Naive thymus-derived CD4-positive, alpha-beta T cell (primary cell): ENCODE measurements at regions of chr1 and their contacts with region 1.

Region 1: GRCh38 chr1:27662707-27663393 is 9.1 kb downstream of the IFI6 start:
- DNase-seq: peak; percentile 76 to 94 (median 88)
- ATAC-seq: peak; percentile 80
- H3K4me3 ChIP-seq: peak overlapping the region; percentile 64
- H3K4me3 Mint-ChIP-seq: peak overlapping the region; percentile 82 to 94 (median 90)
- H3K27ac ChIP-seq: peak overlapping the region; percentile 81
- H3K27ac Mint-ChIP-seq: peak overlapping the region; percentile 95 to 100 (median 98)
- H3K4me1 ChIP-seq: peaks cover 38 to 46% of the 10 kb centered on the region in 2 donors
- H3K4me1 Mint-ChIP-seq: peaks cover 39 to 62% (median 48%) of the 10 kb centered on the region in 7 donors
- H3K27me3 ChIP-seq: no peaks in the 10 kb centered on the region
- H3K27me3 Mint-ChIP-seq: no peaks in the 10 kb centered on the region

Region 2: DNA sequence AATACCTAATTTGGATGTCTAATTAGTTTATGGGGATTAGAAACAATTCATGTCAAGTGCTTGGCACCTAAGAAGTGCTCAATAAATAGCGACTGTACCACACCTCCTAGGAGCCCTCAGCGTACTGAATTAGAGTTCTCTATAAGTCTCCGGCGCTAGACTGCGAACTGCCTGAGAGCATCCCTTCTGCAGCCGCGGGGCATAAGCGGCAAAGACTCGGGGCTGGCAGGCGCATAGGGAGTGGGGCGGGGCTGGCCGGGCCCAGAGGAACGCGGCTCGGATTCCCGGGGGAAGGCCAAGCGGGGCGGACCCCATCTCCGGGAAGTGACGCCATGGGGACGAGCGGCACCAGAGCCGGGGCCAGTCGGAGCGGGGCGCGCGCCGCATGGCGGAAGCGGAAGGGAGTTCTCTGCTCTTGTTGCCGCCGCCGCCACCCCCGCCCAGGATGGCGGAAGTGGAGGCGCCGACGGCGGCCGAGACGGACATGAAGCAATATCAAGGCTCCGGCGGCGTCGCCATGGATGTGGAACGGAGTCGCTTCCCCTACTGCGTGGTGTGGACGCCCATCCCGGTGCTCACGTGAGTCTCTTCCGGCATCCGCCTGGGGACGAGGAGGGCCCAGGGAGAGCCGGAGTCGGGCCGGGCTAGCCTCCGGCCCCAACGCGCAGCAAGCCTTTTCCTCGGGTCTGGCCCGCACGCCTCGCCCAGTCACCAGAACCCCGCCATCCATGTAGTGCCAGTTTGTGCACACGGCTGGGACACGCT is 340.9 kb before region 1 on chr1 and contains the start of gene TMEM222:
- CTCF ChIA-PET with region 1: no interaction called
- POLR2A ChIA-PET with region 1: interaction called, 3 read pairs
- intact Hi-C with region 1: loop called (anchors 2 to 5 kb)
- DNase-seq: peak; percentile 94 to 99 (median 97)
- ATAC-seq: peak; percentile 98
- H3K4me3 ChIP-seq: peak within 1 kb of the TSS; percentile 91
- H3K4me3 Mint-ChIP-seq: peak within 1 kb of the TSS; percentile 91 to 99 (median 96)
- H3K27ac ChIP-seq: peak within 1 kb of the TSS; percentile 95
- H3K27ac Mint-ChIP-seq: peak within 1 kb of the TSS; percentile 88 to 97 (median 93)
- H3K4me1 ChIP-seq: peaks cover 18 to 22% of the 10 kb centered on the region in 2 donors
- H3K4me1 Mint-ChIP-seq: peaks cover 22 to 59% (median 54%) of the 10 kb centered on the region in 7 donors
- H3K27me3 ChIP-seq: no peaks in the 10 kb centered on the region
- H3K27me3 Mint-ChIP-seq: peaks cover 0 to 5% (median 3%) of the 10 kb centered on the region in 5 donors
- total RNA-seq, gene TMEM222: 23.7 to 44.0 (median 41.9) TPM

Region 3: DNA sequence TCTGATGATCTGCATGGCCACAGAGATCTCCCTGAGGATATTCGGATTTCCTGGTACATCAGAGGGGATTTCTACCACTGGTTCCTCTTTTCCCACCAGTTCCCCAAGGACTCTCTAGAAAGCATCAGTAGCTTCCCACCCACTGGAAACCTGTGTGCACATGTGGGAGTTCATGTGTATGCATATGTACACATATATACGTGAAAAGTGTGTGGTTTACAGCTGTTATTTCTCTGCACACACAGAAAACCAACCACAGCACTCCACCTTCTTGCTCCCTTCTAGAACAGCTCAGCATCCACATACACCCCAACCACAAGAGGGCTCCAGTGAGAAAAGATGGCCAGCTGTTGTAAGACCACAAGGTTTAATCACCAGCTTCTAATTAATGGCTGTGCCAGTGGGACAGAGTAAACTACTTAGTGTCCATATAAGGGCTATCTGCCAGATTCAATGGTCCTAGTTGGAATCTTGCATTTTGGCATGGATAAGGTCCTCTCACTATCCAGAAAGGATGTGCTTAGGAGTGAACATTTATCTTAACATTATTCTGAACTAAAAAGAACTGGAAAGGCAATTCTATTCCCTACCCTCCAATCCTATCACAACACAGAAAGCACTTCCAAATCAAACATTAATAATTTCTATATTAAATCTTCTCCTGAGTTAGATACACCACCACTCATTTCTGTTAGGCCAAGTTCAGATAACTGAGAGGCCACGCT is 246.3 kb before region 1 on chr1:
- CTCF ChIA-PET with region 1: interaction called, 8 read pairs
- POLR2A ChIA-PET with region 1: no interaction called
- intact Hi-C with region 1: loop called in 1 of 2 experiments (anchors 5 kb)
- DNase-seq: peak in 7 of 9 donors; percentile 44 to 67 (median 56)
- ATAC-seq: peak; percentile 87
- H3K4me3 ChIP-seq: no peak overlapping the region
- H3K4me3 Mint-ChIP-seq: no peak overlapping the region
- H3K27ac ChIP-seq: peak overlapping the region; percentile 10
- H3K27ac Mint-ChIP-seq: peak overlapping the region; percentile 3 to 85 (median 53)
- H3K4me1 ChIP-seq: peaks cover 0 to 11% of the 10 kb centered on the region in 2 donors
- H3K4me1 Mint-ChIP-seq: peaks cover 12 to 46% (median 35%) of the 10 kb centered on the region in 7 donors
- H3K27me3 ChIP-seq: no peaks in the 10 kb centered on the region
- H3K27me3 Mint-ChIP-seq: no peaks in the 10 kb centered on the region

Region 4: GRCh38 chr1:27556781-27557595 is 105.9 kb before region 1 on chr1:
- CTCF ChIA-PET with region 1: interaction called, 11 read pairs
- POLR2A ChIA-PET with region 1: interaction called, 11 read pairs
- intact Hi-C with region 1: loop called (anchors 1 kb)
- DNase-seq: peak; percentile 51 to 79 (median 65)
- ATAC-seq: peak; percentile 87
- H3K4me3 ChIP-seq: no peak overlapping the region
- H3K4me3 Mint-ChIP-seq: peak overlapping the region; percentile 14 to 88 (median 67)
- H3K27ac ChIP-seq: no peak overlapping the region
- H3K27ac Mint-ChIP-seq: peak overlapping the region; percentile 32 to 98 (median 81)
- H3K4me1 ChIP-seq: peaks cover 8 to 16% of the 10 kb centered on the region in 2 donors
- H3K4me1 Mint-ChIP-seq: peaks cover 23 to 56% (median 46%) of the 10 kb centered on the region in 7 donors
- H3K27me3 ChIP-seq: no peaks in the 10 kb centered on the region
- H3K27me3 Mint-ChIP-seq: no peaks in the 10 kb centered on the region

Region 5: DNA sequence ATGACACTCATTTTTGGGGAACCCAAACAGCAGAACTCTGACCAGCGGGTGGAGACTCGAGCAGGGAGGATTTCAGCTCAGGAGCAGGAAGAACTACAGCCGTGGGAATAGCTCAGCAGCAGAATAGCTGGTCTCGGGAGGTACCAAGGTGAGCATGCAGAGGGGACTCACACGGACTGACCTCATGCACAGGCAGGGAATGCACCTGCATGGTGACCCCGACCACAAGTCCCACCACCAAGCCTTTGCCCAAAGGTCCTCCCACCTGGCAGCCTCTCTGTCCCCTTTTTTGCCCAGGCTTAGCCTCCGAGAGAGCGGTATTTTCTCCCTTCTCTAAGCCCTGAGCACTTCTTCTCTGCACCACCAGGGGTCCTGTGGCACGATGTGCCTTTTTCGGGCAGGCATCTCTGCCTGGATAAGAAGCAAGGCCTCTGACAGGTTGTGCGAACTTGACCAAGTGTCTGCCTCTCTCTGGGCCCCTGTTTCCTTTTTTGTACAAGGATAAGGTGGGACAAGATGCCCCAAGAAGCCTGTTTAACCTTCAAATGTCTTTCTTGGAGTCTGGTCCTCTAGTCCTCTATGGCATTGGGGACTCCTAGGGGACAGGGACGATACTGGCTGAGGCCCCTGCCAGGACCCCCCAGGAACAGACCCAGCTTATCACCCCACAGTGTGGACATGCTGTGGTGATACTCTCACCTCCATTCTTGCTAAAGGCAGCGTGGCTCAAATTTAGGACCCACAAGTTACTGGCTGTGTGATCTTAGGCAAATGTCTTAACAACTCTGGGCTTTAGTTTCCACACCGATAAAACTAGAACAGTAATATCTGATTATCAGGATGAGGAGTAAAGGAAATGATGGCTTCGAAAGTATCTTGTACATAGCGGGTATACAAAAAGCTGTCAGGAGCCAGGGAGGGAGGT is 18.9 kb before region 1 on chr1:
- CTCF ChIA-PET with region 1: interaction called, 109 read pairs
- POLR2A ChIA-PET with region 1: interaction called, 57 read pairs
- intact Hi-C with region 1: loop called (anchors 1 kb)
- DNase-seq: peak in 8 of 9 donors; percentile 54 to 79 (median 67)
- ATAC-seq: peak; percentile 98
- H3K4me3 ChIP-seq: no peak overlapping the region
- H3K4me3 Mint-ChIP-seq: peak overlapping the region in 4 of 10 donors; percentile 7 to 34 (median 28)
- H3K27ac ChIP-seq: no peak overlapping the region
- H3K27ac Mint-ChIP-seq: peak overlapping the region; percentile 38 to 85 (median 64)
- H3K4me1 ChIP-seq: peaks cover 11 to 12% of the 10 kb centered on the region in 2 donors
- H3K4me1 Mint-ChIP-seq: peaks cover 4 to 38% (median 23%) of the 10 kb centered on the region in 7 donors
- H3K27me3 ChIP-seq: no peaks in the 10 kb centered on the region
- H3K27me3 Mint-ChIP-seq: no peaks in the 10 kb centered on the region

Region 6: GRCh38 chr1:27689423-27690173 is 26.7 kb after region 1 on chr1:
- CTCF ChIA-PET with region 1: no interaction called
- POLR2A ChIA-PET with region 1: no interaction called
- intact Hi-C with region 1: no loop called
- DNase-seq: no peak
- ATAC-seq: no peak
- H3K4me3 ChIP-seq: no peak overlapping the region
- H3K4me3 Mint-ChIP-seq: peak overlapping the region in 1 of 10 donors; percentile 7
- H3K27ac ChIP-seq: no peak overlapping the region
- H3K27ac Mint-ChIP-seq: peak overlapping the region in 2 of 9 donors; percentile 34 to 79
- H3K4me1 ChIP-seq: no peaks in the 10 kb centered on the region
- H3K4me1 Mint-ChIP-seq: peaks cover 0 to 11% (median 0%) of the 10 kb centered on the region in 7 donors
- H3K27me3 ChIP-seq: no peaks in the 10 kb centered on the region
- H3K27me3 Mint-ChIP-seq: peaks cover 0 to 21% (median 0%) of the 10 kb centered on the region in 5 donors